ENCODE measurements at regions of chr9 and their contacts with region 1.

Region 1: DNA sequence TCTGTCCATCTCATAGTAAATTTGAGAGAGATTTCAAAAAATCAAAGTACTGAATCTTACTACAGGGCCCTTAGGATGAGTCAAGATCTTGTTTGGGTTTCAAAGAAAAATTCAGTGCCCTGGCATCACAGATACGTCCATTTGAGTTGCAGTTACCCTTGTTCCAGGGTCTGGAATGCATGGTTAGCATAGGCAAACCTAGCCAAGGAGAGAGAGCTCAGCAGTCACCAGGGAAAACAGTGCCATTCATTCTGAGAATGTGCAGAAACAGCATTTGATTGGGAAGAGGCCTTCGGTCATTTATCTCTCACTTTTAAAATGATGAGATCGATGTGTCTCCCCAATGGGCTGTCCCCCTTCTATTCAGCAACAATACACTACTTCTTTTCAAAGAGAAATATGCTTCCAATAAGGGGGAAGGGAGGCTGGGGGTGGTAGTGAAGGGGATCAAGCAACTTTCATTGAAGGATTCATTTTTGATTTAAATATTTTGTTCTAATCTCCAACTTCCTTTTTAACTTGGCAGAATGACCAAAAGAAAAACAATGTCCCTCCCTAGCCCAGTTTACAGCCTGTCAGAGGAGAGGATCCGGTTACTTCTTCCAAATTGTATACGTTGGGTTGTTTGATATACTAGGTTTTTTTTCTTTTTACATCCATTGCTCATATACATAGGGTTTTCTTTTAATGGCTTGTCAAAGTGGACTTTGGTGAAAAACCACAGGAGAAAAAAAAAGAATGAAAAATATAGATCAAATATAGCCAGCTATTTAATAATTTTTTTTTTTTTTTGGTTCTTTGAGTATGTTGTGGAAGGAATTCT is 491.1 kb downstream of the CCDC171 start:
- DNase-seq: no peak
- H3K4me3 ChIP-seq: no peak overlapping the region
- H3K27ac ChIP-seq: no peak overlapping the region
- H3K4me1 ChIP-seq: no peaks in the 10 kb centered on the region
- H3K27me3 ChIP-seq: no peaks in the 10 kb centered on the region
- CTCF ChIP-seq: no peak
- POLR2A ChIP-seq: no peak

Region 2: GRCh38 chr9:16028548-16028947 is 15.4 kb before region 1 on chr9:
- intact Hi-C with region 1: loop called (anchors 2 kb)
- DNase-seq: no peak
- H3K4me3 ChIP-seq: no peak overlapping the region
- H3K27ac ChIP-seq: no peak overlapping the region
- H3K4me1 ChIP-seq: no peaks in the 10 kb centered on the region
- H3K27me3 ChIP-seq: no peaks in the 10 kb centered on the region
- CTCF ChIP-seq: no peak
- POLR2A ChIP-seq: no peak